Activated T-helper 1 cell treated with anti-CD3 and anti-CD28 coated beads, Interleukin-12 subunit alpha, Interleukin-12 subunit beta, Interleukin-2, Interleukin-4 antibody, amounts not matched to agents 30 ng/mL and 10 ng/mL and 1 ng/mL, durations not matched to agents 14 hours and 24 hours and 36 hours (primary cell): ENCODE measurements at regions of chr1 and their contacts with region 1.

Region 1: GRCh38 chr1:173867753-173868265 is at the start of gene GAS5:
- DNase-seq: peak; percentile 99
- H3K4me3 Mint-ChIP-seq: peak within 1 kb of the TSS; percentile 98
- H3K27ac Mint-ChIP-seq: peak within 1 kb of the TSS; percentile 98
- H3K4me1 Mint-ChIP-seq: peaks cover 66% of the 10 kb centered on the region
- H3K27me3 Mint-ChIP-seq: no peaks in the 10 kb centered on the region
- total RNA-seq, gene GAS5: 653 and 688 TPM in 2 replicates

Region 2: GRCh38 chr1:173423291-173423690 is 444.5 kb before region 1 on chr1:
- intact Hi-C with region 1: no loop called
- DNase-seq: no peak
- H3K4me3 Mint-ChIP-seq: no peak overlapping the region
- H3K27ac Mint-ChIP-seq: no peak overlapping the region
- H3K4me1 Mint-ChIP-seq: peaks cover 5% of the 10 kb centered on the region
- H3K27me3 Mint-ChIP-seq: no peaks in the 10 kb centered on the region

Region 3: GRCh38 chr1:173476664-173477285 is 391.0 kb before region 1 on chr1:
- intact Hi-C with region 1: loop called (anchors 1 kb)
- DNase-seq: peak; percentile 74
- H3K4me3 Mint-ChIP-seq: peak overlapping the region; percentile 92
- H3K27ac Mint-ChIP-seq: peak overlapping the region; percentile 93
- H3K4me1 Mint-ChIP-seq: peaks cover 65% of the 10 kb centered on the region
- H3K27me3 Mint-ChIP-seq: no peaks in the 10 kb centered on the region

Region 4: GRCh38 chr1:173714759-173715537 is 152.9 kb before region 1 on chr1 and contains the start of gene KLHL20:
- intact Hi-C with region 1: loop called (anchors 1 kb)
- DNase-seq: peak; percentile 84
- H3K4me3 Mint-ChIP-seq: peak within 1 kb of the TSS; percentile 93
- H3K27ac Mint-ChIP-seq: peak within 1 kb of the TSS; percentile 98
- H3K4me1 Mint-ChIP-seq: peaks cover 30% of the 10 kb centered on the region
- H3K27me3 Mint-ChIP-seq: peaks cover 14% of the 10 kb centered on the region
- total RNA-seq, gene KLHL20: 17.8 and 18.3 TPM in 2 replicates

Region 5: GRCh38 chr1:173758980-173759609 is 108.7 kb before region 1 on chr1:
- intact Hi-C with region 1: no loop called
- DNase-seq: no peak
- H3K4me3 Mint-ChIP-seq: no peak overlapping the region
- H3K27ac Mint-ChIP-seq: no peak overlapping the region
- H3K4me1 Mint-ChIP-seq: peaks cover 9% of the 10 kb centered on the region
- H3K27me3 Mint-ChIP-seq: no peaks in the 10 kb centered on the region

Region 6: GRCh38 chr1:173946380-173946921 is 78.6 kb after region 1 on chr1:
- intact Hi-C with region 1: loop called (anchors 5 kb)
- DNase-seq: no peak
- H3K4me3 Mint-ChIP-seq: no peak overlapping the region
- H3K27ac Mint-ChIP-seq: no peak overlapping the region
- H3K4me1 Mint-ChIP-seq: no peaks in the 10 kb centered on the region
- H3K27me3 Mint-ChIP-seq: no peaks in the 10 kb centered on the region

Region 7: DNA sequence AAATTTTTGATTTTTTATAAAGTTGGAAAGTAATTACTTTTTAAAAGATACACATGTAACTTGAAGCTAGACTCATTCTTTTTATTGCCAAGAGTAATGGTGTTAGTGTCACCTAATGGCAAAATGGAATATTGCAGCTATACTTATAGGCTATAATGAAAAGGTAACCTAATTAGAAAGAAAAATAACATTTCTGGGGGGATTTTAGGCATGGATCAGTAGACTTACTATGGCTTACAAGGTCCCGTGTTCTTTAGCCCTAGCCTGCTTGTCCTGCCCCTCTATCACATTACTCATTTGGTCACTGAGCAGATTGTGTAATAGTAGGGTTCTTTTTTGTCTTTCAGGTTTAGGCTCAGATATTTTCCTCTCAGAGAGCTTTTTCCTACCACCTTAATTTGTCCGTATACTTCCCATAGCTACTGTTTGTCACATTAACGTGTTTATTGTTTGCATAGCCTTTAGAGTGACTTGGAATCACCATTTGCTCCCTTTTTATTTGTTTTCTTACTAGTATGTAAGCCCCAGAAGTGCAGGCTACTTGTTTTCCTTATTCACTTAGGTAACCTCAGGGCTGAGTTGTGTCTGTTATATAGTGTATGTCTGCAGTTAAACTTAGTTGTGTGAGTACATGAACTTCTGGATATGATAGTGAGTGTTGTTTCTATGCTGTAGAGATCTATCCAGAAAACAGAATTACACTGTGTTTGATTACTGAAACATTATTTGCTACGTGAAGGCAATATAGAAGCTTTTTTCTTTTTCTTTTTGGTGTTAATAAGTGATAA is 350.2 kb after region 1 on chr1:
- intact Hi-C with region 1: loop called (anchors 1 kb)
- DNase-seq: no peak
- H3K4me3 Mint-ChIP-seq: no peak overlapping the region
- H3K27ac Mint-ChIP-seq: no peak overlapping the region
- H3K4me1 Mint-ChIP-seq: no peaks in the 10 kb centered on the region
- H3K27me3 Mint-ChIP-seq: no peaks in the 10 kb centered on the region